ENCODE measurements at regions of chr9 and their contacts with region 1.

Region 1: GRCh38 chr9:68925175-68925574 is 88.7 kb downstream of the PRKACG start:
- DNase-seq: no peak
- ATAC-seq: no peak
- H3K4me3 ChIP-seq: no peak overlapping the region
- H3K27ac ChIP-seq: no peak overlapping the region
- H3K4me1 ChIP-seq: no peaks in the 10 kb centered on the region
- H3K27me3 ChIP-seq: no peaks in the 10 kb centered on the region
- CTCF ChIP-seq: no peak
- POLR2A ChIP-seq: no peak

Region 2: DNA sequence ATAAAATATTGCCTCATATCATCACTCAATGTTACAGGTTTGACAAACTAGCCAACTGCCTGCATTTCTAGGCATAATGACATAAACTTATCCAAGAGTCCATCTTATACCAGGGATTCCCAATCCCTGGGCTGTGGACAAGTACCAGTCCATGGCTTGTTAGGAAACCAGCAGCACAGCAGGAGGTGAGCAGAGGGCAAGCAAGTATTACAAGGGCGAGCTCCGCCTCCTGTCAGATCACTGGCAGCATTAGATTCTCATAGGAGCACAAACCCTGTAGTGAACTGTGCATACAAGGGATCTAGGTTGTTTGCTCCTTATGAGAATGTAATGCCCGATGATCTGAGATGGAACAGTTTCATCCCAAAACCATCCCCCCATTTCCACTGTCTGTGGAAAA is 56.2 kb before region 1 on chr9:
- in situ Hi-C with region 1: no loop called
- intact Hi-C with region 1: no loop called
- DNase-seq: no peak
- ATAC-seq: no peak
- H3K4me3 ChIP-seq: no peak overlapping the region
- H3K27ac ChIP-seq: no peak overlapping the region
- H3K4me1 ChIP-seq: peaks cover 0 to 12% of the 10 kb centered on the region in 2 donors
- H3K27me3 ChIP-seq: no peaks in the 10 kb centered on the region
- CTCF ChIP-seq: no peak
- POLR2A ChIP-seq: no peak

Region 3: GRCh38 chr9:68883224-68883623 is 42.0 kb before region 1 on chr9:
- in situ Hi-C with region 1: no loop called
- intact Hi-C with region 1: loop called (anchors 1 kb)
- DNase-seq: no peak
- ATAC-seq: no peak
- H3K4me3 ChIP-seq: no peak overlapping the region
- H3K27ac ChIP-seq: no peak overlapping the region
- H3K4me1 ChIP-seq: no peaks in the 10 kb centered on the region
- H3K27me3 ChIP-seq: no peaks in the 10 kb centered on the region
- CTCF ChIP-seq: no peak
- POLR2A ChIP-seq: no peak